ENCODE measurements at regions of chr2 and their contacts with region 1.

Region 1: DNA sequence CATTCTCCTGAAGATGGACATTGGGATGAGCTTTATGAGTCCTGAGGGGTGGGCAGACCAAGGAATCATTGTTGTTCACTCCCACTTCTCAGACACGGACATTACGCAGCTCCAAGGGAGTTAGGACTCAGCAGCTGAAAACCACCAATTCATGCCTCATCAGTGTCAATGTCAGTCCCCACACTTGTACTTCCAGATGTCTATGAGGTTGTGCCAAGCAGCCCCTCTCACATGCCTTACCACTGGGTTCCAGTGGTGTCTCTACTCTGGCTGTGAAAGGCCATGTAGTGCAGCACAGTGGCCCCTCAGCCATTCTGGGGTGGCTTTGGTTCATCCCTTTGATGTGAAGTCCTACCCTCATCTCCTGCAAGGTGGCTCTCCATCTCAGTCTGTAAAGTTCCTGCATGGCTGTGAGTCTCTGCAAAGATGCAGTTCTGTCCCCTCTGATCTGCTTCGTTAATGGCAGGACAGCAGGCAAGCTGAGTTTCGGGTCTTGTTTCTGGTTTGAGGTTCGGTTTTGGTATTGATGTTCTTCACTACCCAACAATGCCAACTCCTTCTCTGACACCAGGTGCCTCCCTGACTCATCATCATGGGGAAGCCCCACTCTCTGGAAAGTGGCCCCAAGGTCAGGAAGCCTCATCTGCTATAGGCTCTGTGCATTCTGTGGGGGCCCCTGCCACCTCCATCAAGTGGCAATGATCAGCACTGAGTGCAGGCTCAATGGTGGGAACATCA is 14.0 kb upstream of the COL6A3 start:
- DNase-seq: no peak
- H3K4me3 ChIP-seq: no peak overlapping the region
- CTCF ChIP-seq: no peak

Region 2: DNA sequence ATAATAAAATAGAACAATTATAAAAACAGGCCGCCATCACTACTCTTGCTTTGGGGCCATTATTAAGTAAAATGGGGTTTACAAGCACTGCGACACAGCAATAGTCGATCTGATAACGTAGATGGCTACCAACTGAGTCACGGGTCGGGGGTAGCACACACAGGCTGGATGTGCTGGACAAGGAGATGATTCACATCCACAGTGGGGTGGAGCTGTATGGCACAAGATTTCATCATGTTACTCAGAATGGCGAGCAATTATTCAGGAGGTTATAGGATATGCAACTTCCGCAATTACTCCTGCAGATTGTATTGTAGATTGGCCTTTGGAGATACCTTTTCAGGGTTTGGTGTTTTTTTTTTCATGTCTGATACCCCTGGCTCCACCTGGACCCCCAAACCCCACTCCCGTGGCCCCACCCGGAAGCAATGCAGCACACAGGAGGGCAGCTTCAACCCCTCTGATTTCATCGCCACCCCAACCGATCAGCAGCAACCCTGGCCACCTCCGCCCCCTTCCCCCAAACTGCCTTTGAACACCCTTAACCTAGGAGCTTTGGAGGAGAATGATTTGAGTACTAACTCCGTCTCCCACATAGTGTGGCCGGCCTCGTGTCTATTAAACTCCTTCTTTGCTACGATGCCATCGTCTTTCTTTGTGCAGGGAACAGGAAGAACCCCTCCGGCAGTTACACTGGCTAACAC is 37.7 kb after region 1 on chr2:
- CTCF ChIA-PET with region 1: interaction called, 111 read pairs
- POLR2A ChIA-PET with region 1: interaction called, 10 read pairs
- DNase-seq: peak; percentile 95
- H3K4me3 ChIP-seq: no peak overlapping the region
- CTCF ChIP-seq: no peak